ENCODE measurements at regions of chr11 and their contacts with region 1.

Region 1: GRCh38 chr11:43992834-43993637 is 50.6 kb downstream of the C11orf96 start:
- DNase-seq: no peak
- H3K4me3 Mint-ChIP-seq: peak overlapping the region; percentile 25
- H3K27ac Mint-ChIP-seq: no peak overlapping the region
- H3K4me1 Mint-ChIP-seq: no peaks in the 10 kb centered on the region
- H3K27me3 Mint-ChIP-seq: peaks cover 55% of the 10 kb centered on the region
- CTCF ChIP-seq: no peak

Region 2: DNA sequence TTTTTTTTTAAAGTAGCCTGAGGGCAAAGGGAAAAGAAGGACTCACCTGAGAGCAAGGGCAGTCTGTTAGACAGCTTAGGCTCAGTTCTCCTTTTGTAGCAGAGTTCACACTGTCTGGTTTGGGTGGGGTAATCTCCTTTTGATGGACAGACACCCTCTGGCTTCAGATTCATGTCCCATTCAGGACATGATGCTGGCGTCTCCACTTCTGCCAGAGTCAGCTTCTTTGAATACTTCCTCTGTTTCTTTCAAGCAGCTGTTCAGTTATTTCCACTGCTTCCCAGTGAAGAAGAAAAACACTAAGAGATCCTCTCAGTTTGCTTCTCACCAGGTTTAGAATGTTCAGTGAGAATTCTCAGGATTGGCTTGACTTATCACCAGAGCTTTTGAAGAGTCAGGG is 391.5 kb before region 1 on chr11:
- CTCF ChIA-PET with region 1: no interaction called
- intact Hi-C with region 1: no loop called
- DNase-seq: no peak
- H3K4me3 Mint-ChIP-seq: no peak overlapping the region
- H3K27ac Mint-ChIP-seq: no peak overlapping the region
- H3K4me1 Mint-ChIP-seq: no peaks in the 10 kb centered on the region
- H3K27me3 Mint-ChIP-seq: peaks cover 34% of the 10 kb centered on the region
- CTCF ChIP-seq: no peak

Region 3: DNA sequence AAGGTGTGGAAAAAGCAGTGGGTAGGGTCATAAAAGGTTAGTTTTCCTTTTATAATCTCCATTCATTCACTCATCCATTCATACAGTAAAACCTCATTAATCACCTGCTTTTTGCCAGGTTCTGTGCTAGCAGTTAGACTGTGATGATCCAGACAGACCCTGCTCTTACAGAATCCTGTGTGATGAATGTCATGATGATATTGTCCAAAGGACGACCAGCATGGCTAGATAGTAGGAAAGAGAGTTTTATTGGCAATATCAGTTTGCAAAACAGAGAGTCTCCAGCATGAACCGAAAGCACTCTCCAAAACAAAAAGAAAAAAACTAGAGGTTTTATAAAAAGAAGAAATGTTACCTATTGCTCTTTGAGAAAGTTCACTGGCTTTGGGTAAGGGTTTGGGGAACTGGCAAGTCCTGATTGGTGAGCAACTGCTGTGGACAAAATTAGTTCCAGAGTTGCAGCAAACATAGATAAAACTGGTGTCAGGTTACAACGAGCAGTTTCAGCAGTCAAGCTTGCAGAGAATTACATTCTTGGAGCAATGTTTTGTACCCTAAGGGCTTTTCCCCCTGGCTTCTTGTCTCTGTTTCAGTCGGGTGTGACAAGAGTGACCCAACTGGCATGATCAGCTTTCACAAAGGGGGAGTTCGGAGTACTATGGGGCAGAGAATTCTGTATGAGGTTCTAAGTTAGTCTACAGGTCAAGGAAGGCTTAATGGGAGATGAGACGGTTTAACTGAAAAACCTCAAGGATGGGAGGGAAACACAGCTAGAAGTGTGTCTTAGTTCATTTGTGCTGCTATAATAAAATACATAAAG is 254.2 kb before region 1 on chr11:
- CTCF ChIA-PET with region 1: no interaction called
- intact Hi-C with region 1: no loop called
- DNase-seq: peak; percentile 49
- H3K4me3 Mint-ChIP-seq: peak overlapping the region; percentile 49
- H3K27ac Mint-ChIP-seq: peak overlapping the region; percentile 73
- H3K4me1 Mint-ChIP-seq: peaks cover 51% of the 10 kb centered on the region
- H3K27me3 Mint-ChIP-seq: no peaks in the 10 kb centered on the region
- CTCF ChIP-seq: no peak

Region 4: DNA sequence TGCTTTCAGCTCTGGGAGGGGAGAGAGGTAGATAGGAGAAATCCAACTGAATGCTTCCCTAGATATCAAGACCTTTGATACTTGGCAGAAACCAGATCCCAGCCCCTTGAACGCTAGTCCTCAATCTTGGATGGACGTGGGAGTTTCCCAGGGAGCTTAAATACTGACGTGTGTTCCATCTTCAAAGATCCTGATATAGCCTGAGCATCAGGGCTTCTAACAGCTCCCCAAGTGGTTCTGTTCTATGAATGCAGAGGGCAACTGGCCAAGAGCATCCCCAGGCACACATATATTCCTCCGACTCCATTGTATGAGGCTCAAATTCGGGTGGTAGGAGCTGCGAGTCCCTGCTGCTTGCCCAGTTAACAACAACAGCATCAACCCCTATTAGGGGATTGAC is 64.3 kb after region 1 on chr11:
- CTCF ChIA-PET with region 1: no interaction called
- intact Hi-C with region 1: loop called (anchors 10 kb)
- DNase-seq: no peak
- H3K4me3 Mint-ChIP-seq: no peak overlapping the region
- H3K27ac Mint-ChIP-seq: no peak overlapping the region
- H3K4me1 Mint-ChIP-seq: no peaks in the 10 kb centered on the region
- H3K27me3 Mint-ChIP-seq: peaks cover 56% of the 10 kb centered on the region
- CTCF ChIP-seq: no peak

Region 5: DNA sequence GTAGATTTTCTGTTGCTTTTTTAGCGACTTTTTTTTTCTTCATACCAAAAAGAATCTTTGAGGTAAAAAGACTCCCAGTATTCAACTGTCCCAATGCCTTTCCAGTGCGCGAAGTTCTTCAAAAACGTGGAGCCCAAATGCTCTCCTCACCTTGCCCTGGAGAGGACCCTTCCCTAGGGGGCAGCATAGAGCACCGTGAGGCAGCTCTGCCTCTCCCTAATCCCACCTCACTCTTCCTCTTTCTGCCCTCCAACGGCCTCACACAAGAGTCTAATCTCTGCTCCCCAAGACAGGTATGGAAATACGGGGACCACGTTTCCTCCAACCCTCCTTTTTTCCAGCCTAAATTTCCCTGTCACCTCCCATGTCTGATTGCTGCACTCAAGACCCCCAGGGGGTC is 434.4 kb after region 1 on chr11:
- CTCF ChIA-PET with region 1: no interaction called
- intact Hi-C with region 1: no loop called
- DNase-seq: peak; percentile 28
- H3K4me3 Mint-ChIP-seq: no peak overlapping the region
- H3K27ac Mint-ChIP-seq: no peak overlapping the region
- H3K4me1 Mint-ChIP-seq: no peaks in the 10 kb centered on the region
- H3K27me3 Mint-ChIP-seq: peaks cover 86% of the 10 kb centered on the region
- CTCF ChIP-seq: peak; percentile 44